H1 (cell line): ENCODE measurements at regions of chr7 and their contacts with region 1.

Region 1: GRCh38 chr7:20132631-20133030 is 84.6 kb downstream of the MACC1 start:
- DNase-seq: no peak
- H3K4me3 ChIP-seq: no peak overlapping the region
- H3K27ac ChIP-seq: no peak overlapping the region
- H3K4me1 ChIP-seq: peaks cover 0 to 14% (median 1%) of the 10 kb centered on the region in 4 experiments; a peak in 3 of 7 replicates
- H3K27me3 ChIP-seq: no peaks in the 10 kb centered on the region
- CTCF ChIP-seq: no peak
- EP300 ChIP-seq: no peak
- POLR2A ChIP-seq: no peak; a peak in 1 of 3 replicates
- RAD21 ChIP-seq: no peak

Region 2: GRCh38 chr7:20122073-20122472 is 10.6 kb before region 1 on chr7:
- CTCF ChIA-PET with region 1: interaction called, 4 read pairs
- POLR2A ChIA-PET with region 1: interaction called, 68 read pairs
- DNase-seq: no peak
- H3K4me3 ChIP-seq: peak overlapping the region; percentile 64 to 80 (median 70)
- H3K27ac ChIP-seq: peak overlapping the region; percentile 93
- H3K4me1 ChIP-seq: peaks cover 8 to 32% (median 20%) of the 10 kb centered on the region in 4 experiments
- H3K27me3 ChIP-seq: no peaks in the 10 kb centered on the region
- CTCF ChIP-seq: no peak
- EP300 ChIP-seq: no peak
- POLR2A ChIP-seq: no peak; a peak in 1 of 3 replicates
- RAD21 ChIP-seq: no peak